A549 (cell line): ENCODE measurements at regions of chr16 and their contacts with region 1.

Region 1: GRCh38 chr16:22190776-22191531 is 15.1 kb upstream of the EEF2K start:
- DNase-seq: peak; percentile 91 to 97
- ATAC-seq: peak; percentile 66 to 81
- H3K4me3 ChIP-seq: peak overlapping the region; percentile 80
- H3K27ac ChIP-seq: peak overlapping the region; percentile 82 to 88
- H3K4me1 ChIP-seq: peaks cover 14% of the 10 kb centered on the region
- CTCF ChIP-seq: no peak
- EP300 ChIP-seq: no peak
- POLR2A ChIP-seq: peak; percentile 63
- RAD21 ChIP-seq: no peak

Region 2: GRCh38 chr16:21946889-21947635 is 243.9 kb before region 1 on chr16:
- CTCF ChIA-PET with region 1: interaction called, 35 read pairs
- POLR2A ChIA-PET with region 1: interaction called, 7 read pairs
- DNase-seq: no peak
- ATAC-seq: no peak
- H3K4me3 ChIP-seq: no peak overlapping the region
- H3K27ac ChIP-seq: no peak overlapping the region
- H3K4me1 ChIP-seq: peaks cover 13% of the 10 kb centered on the region
- CTCF ChIP-seq: no peak
- EP300 ChIP-seq: no peak
- POLR2A ChIP-seq: no peak
- RAD21 ChIP-seq: no peak

Region 3: DNA sequence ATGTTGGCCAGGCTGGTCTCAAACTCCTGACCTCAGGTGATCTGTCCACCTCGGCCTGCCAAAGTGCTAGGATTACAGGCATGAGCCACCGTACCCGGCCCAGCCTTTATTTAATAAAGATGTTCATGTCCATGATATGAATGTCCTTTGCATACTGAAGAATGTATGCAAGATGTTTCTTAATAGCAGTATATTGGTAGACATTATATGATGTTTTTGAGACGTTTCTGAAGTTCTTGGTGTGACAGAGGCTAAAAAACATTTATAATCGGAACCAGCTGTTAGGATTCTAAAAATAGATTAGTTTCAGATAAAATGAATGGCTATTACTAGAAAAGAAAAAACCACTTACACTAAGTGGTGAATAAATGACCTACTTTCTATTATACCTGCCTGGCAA is 201.8 kb before region 1 on chr16:
- CTCF ChIA-PET with region 1: interaction called, 14 read pairs
- POLR2A ChIA-PET with region 1: interaction called, 4 read pairs
- DNase-seq: no peak
- ATAC-seq: no peak
- H3K4me3 ChIP-seq: no peak overlapping the region
- H3K27ac ChIP-seq: no peak overlapping the region
- H3K4me1 ChIP-seq: no peaks in the 10 kb centered on the region
- CTCF ChIP-seq: no peak
- EP300 ChIP-seq: no peak
- POLR2A ChIP-seq: no peak
- RAD21 ChIP-seq: no peak

Region 4: GRCh38 chr16:22001591-22001990 is 189.4 kb before region 1 on chr16:
- CTCF ChIA-PET with region 1: interaction called, 109 read pairs
- POLR2A ChIA-PET with region 1: interaction called, 10 read pairs
- DNase-seq: no peak
- ATAC-seq: no peak
- H3K4me3 ChIP-seq: no peak overlapping the region
- H3K27ac ChIP-seq: no peak overlapping the region
- H3K4me1 ChIP-seq: peaks cover 7% of the 10 kb centered on the region; the same call in 1 of the 3 replicates
- CTCF ChIP-seq: no peak
- EP300 ChIP-seq: no peak
- POLR2A ChIP-seq: no peak
- RAD21 ChIP-seq: no peak

Region 5: GRCh38 chr16:22098405-22099255 is 92.3 kb before region 1 on chr16:
- CTCF ChIA-PET with region 1: interaction called, 16 read pairs
- POLR2A ChIA-PET with region 1: no interaction called
- DNase-seq: peak; percentile 66 to 80
- ATAC-seq: peak; percentile 94 to 97
- H3K4me3 ChIP-seq: no peak overlapping the region
- H3K27ac ChIP-seq: no peak overlapping the region
- H3K4me1 ChIP-seq: no peaks in the 10 kb centered on the region
- CTCF ChIP-seq: peak; percentile 78
- EP300 ChIP-seq: no peak
- POLR2A ChIP-seq: no peak
- RAD21 ChIP-seq: peak; percentile 63 to 76

Region 6: DNA sequence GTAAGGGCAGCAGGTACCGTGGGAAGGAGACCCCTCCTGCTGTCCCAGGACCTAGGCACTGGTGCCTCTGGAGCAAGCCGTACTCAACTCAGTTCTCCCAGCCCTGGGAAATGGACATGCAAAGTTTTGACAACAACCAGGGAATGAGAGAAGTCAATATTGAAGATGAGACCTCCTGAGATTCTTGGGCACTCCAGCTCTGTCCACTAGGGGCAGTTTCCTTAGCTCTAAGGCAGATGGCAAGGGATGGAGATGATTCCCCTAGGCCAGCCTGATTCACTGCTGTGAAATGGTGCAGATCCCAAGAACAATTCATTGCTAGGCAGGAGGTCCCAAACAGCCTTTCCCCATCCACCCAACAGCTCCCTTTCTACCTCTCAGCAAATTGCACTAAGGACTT is 49.2 kb before region 1 on chr16:
- CTCF ChIA-PET with region 1: interaction called, 12 read pairs
- POLR2A ChIA-PET with region 1: no interaction called
- DNase-seq: peak; percentile 54 to 55
- ATAC-seq: peak; percentile 81 to 92
- H3K4me3 ChIP-seq: no peak overlapping the region
- H3K27ac ChIP-seq: no peak overlapping the region
- H3K4me1 ChIP-seq: no peaks in the 10 kb centered on the region
- CTCF ChIP-seq: peak; percentile 35; the same call in 2 of the 3 replicates
- EP300 ChIP-seq: no peak
- POLR2A ChIP-seq: no peak
- RAD21 ChIP-seq: 0 out of 5 replicates have a peak, but pooled peaks of 1 of the 2 experiments have one; percentile 11

Region 7: GRCh38 chr16:22174642-22175041 is 16.3 kb before region 1 on chr16:
- CTCF ChIA-PET with region 1: interaction called, 46 read pairs
- POLR2A ChIA-PET with region 1: no interaction called
- DNase-seq: no peak
- ATAC-seq: no peak
- H3K4me3 ChIP-seq: no peak overlapping the region
- H3K27ac ChIP-seq: no peak overlapping the region
- H3K4me1 ChIP-seq: no peaks in the 10 kb centered on the region
- CTCF ChIP-seq: no peak
- EP300 ChIP-seq: no peak
- POLR2A ChIP-seq: no peak
- RAD21 ChIP-seq: no peak